Mammary epithelial cell (primary cell): ENCODE measurements at regions of chr11 and their contacts with region 1.

Region 1: GRCh38 chr11:44286268-44286880 is 23.6 kb downstream of the ALX4 start:
- DNase-seq: peak; percentile 44
- H3K4me3 ChIP-seq: no peak overlapping the region
- H3K27ac ChIP-seq: no peak overlapping the region
- H3K4me1 ChIP-seq: peaks cover 12% of the 10 kb centered on the region
- H3K27me3 ChIP-seq: no peaks in the 10 kb centered on the region
- CTCF ChIP-seq: peak; percentile 95 to 97

Region 2: GRCh38 chr11:44133335-44133946 is 152.9 kb before region 1 on chr11:
- CTCF ChIA-PET with region 1: no interaction called
- dilution Hi-C with region 1: no loop called
- in situ Hi-C with region 1: no loop called
- intact Hi-C with region 1: loop called (anchors 5 kb)
- DNase-seq: no peak
- H3K4me3 ChIP-seq: no peak overlapping the region
- H3K27ac ChIP-seq: no peak overlapping the region
- H3K4me1 ChIP-seq: peaks cover 4% of the 10 kb centered on the region
- H3K27me3 ChIP-seq: no peaks in the 10 kb centered on the region
- CTCF ChIP-seq: peak; percentile 65 to 66

Region 3: GRCh38 chr11:44208976-44209603 is 77.3 kb before region 1 on chr11:
- CTCF ChIA-PET with region 1: no interaction called
- dilution Hi-C with region 1: no loop called
- in situ Hi-C with region 1: no loop called
- intact Hi-C with region 1: no loop called
- DNase-seq: no peak
- H3K4me3 ChIP-seq: no peak overlapping the region
- H3K27ac ChIP-seq: no peak overlapping the region
- H3K4me1 ChIP-seq: no peaks in the 10 kb centered on the region
- H3K27me3 ChIP-seq: no peaks in the 10 kb centered on the region
- CTCF ChIP-seq: no peak

Region 4: DNA sequence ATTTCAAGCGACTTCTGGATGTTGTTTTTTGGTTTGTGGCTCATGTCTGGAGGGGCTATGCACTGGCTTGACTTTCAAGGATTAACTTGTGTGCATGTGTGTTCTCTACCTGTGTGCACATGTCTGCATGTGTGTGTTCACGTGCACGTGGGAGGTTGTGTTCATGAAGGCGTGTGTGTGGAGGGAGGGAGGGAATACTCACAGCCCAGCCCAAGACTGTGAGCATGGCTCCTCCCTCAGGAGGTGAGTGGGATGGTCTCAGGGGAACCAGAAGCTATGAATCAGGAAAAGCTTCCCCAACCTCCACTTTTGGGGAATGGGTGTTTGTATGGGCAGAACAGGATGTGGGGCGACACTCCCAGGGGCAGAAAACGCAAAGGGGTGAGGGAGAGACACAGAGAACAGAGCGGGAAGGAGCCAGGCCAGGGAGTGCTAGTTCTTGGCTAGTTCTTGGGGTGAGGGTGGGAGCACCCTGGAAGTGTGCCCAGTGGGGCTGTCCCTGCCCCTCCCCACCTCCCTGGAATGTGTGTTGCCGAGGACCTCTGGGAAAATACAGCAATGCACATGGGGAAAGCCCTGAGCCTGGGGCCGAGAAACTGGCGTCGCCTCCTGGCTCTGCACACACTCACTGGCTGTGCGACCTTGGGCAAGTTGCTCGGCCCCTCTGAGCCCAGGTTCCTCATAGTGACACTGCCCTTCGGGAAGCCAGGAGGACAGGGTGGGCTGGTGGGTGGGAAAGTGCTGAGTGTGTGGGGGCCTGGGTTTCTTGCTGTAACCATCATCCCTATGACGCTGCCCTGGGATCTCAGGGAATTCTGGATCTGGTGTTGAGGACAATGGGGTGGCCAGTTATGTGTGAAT is 40.5 kb after region 1 on chr11:
- CTCF ChIA-PET with region 1: no interaction called
- dilution Hi-C with region 1: no loop called
- in situ Hi-C with region 1: no loop called
- intact Hi-C with region 1: loop called (anchors 2 kb)
- DNase-seq: no peak
- H3K4me3 ChIP-seq: no peak overlapping the region
- H3K27ac ChIP-seq: no peak overlapping the region
- H3K4me1 ChIP-seq: no peaks in the 10 kb centered on the region
- H3K27me3 ChIP-seq: peaks cover 15% of the 10 kb centered on the region
- CTCF ChIP-seq: peak in 1 of 2 donors; percentile 27

Region 5: DNA sequence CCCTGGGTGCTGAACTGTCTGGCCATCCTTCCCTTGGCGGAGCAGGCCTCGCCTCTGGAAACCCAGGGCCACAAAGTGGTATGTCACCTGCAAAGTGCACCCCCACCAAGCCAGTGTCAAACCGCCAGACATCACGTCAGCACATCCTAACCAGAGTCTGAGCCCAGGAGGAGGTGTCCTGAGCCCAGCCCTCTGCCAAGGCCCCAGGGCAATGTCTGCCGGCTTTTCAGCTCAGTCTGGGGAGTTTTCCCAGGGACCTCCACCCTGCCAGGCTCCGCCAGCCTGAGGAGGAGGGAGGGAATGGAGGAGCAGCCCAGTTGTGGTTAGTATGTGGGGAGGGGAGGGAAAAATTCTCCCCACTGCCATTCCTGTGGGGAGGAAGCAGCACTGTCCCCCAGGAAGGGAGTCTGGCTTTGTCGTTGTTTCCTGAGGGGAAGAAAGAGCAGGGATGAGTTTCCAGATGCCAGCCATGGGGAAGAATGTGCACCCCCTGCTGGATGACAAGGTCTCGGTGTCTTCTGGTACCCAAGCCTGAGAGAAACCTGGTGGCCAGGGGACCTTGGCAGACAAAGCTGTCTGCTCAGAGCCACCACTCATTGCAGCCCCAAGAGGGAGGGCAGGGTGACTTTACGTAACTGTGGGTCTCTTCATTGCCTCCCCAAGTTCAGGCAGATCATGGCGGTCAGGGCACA is 197.7 kb after region 1 on chr11:
- CTCF ChIA-PET with region 1: interaction called, 5 read pairs
- dilution Hi-C with region 1: no loop called
- in situ Hi-C with region 1: no loop called
- intact Hi-C with region 1: loop called (anchors 1 kb)
- DNase-seq: peak; percentile 8
- H3K4me3 ChIP-seq: no peak overlapping the region
- H3K27ac ChIP-seq: no peak overlapping the region
- H3K4me1 ChIP-seq: no peaks in the 10 kb centered on the region
- H3K27me3 ChIP-seq: no peaks in the 10 kb centered on the region
- CTCF ChIP-seq: peak; percentile 32 to 50

Region 6: GRCh38 chr11:44538375-44539054 is 252.1 kb after region 1 on chr11:
- CTCF ChIA-PET with region 1: no interaction called
- dilution Hi-C with region 1: no loop called
- in situ Hi-C with region 1: loop called (anchors 5 kb)
- intact Hi-C with region 1: loop called (anchors 1 kb)
- DNase-seq: peak; percentile 49
- H3K4me3 ChIP-seq: no peak overlapping the region
- H3K27ac ChIP-seq: no peak overlapping the region
- H3K4me1 ChIP-seq: no peaks in the 10 kb centered on the region
- H3K27me3 ChIP-seq: no peaks in the 10 kb centered on the region
- CTCF ChIP-seq: peak; percentile 90 to 92

Region 7: DNA sequence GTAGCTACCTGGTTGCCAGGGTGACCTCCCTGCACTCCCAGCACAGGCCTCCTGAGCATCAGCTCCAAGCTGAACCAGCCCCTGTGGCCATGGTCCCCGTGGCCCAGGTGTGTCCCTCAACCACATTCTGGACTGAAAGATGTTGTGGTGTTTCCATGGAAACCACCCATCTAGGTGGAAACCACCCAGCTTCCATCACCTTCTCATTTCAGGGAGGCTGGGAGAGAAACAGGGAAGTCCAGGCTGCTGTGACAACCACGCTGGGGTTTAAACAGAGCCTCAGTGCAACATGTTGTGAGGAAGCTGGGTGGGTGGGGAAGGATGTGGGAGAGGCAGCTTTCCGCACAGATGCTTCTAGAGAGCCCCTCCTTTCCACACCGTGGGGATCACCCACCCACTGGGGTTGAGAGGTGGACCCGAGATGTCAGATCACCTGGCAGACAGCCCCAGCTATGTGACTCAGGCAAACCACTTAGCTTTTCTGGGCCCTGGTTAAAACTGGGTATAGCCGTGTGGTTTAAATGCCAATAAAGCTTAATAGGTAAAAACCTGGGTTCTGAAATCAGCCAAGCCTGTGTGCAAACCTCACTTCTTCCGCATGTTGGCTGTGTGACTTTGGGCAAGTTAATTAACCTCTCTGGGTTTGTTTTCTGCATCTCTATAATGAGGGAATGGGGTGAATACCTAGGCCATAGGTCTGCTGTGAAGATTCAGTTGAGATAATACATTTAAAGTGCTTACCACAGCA is 325.5 kb after region 1 on chr11:
- CTCF ChIA-PET with region 1: no interaction called
- dilution Hi-C with region 1: no loop called
- in situ Hi-C with region 1: no loop called
- intact Hi-C with region 1: loop called (anchors 10 kb)
- DNase-seq: peak; percentile 21
- H3K4me3 ChIP-seq: no peak overlapping the region
- H3K27ac ChIP-seq: no peak overlapping the region
- H3K4me1 ChIP-seq: no peaks in the 10 kb centered on the region
- H3K27me3 ChIP-seq: no peaks in the 10 kb centered on the region
- CTCF ChIP-seq: no peak